Brain microvascular endothelial cell (primary cell): ENCODE measurements at regions of chr9 and their contacts with region 1.

Region 1: DNA sequence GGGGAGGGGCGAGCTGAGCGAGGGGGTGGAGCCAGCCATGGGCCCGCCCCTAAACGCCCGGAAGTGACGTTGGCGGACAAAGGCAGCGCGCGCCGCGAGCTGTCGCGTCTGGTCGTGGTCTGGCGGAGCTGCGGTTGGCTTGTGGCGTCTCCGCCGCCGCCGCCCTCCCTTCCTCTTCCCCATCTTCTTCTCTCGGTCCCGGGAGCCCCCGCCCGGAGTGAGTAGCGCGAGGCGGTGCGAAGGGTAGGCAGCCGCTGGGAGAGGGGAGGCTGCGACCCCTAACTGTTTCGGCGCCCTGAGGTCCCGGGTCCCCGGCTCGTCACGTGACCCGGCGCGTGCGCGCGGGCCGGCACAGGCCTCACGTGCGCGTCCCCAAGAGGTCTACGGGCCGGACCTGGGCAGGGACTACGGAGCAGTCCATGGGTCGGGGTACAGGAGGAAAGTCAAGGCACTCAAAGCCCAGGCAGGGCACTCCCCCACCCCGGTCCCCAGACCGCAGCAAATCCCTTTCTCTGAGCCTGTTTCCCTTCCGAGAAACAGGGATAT is at the start of gene NTMT1:
- DNase-seq: peak; percentile 73
- H3K4me3 ChIP-seq: peak within 1 kb of the TSS; percentile 85
- H3K27ac ChIP-seq: peak within 1 kb of the TSS; percentile 93
- H3K27me3 ChIP-seq: no peaks in the 10 kb centered on the region
- CTCF ChIP-seq: no peak

Region 2: GRCh38 chr9:129139993-129140396 is 486.2 kb before region 1 on chr9:
- in situ Hi-C with region 1: loop called (anchors 10 kb)
- DNase-seq: peak; percentile 99
- H3K4me3 ChIP-seq: peak overlapping the region; percentile 37
- H3K27ac ChIP-seq: peak overlapping the region; percentile 100
- H3K27me3 ChIP-seq: no peaks in the 10 kb centered on the region
- CTCF ChIP-seq: no peak

Region 3: GRCh38 chr9:129536041-129536440 is 90.1 kb before region 1 on chr9:
- in situ Hi-C with region 1: no loop called
- DNase-seq: no peak
- H3K4me3 ChIP-seq: no peak overlapping the region
- H3K27ac ChIP-seq: no peak overlapping the region
- H3K27me3 ChIP-seq: no peaks in the 10 kb centered on the region
- CTCF ChIP-seq: no peak

Region 4: DNA sequence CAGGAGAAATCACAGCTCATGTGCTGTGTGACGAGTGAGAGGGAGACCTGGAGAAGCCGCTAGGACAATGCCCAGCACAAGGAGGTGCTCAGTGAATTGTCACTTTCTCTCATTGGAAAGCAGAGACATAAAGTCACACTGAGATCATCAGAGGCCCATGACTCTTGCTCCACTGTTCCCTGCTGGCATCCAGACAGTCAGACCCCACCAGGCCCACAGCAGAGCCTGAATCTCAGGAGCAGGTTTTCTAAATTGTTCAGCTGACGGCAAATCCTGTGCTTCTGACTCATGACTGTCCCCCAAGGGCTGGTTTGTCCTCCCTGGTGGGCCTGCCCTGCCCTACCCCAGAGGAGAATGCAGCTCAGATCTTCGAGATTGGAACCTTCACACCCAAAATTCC is 123.8 kb after region 1 on chr9:
- in situ Hi-C with region 1: no loop called
- DNase-seq: peak; percentile 33
- H3K4me3 ChIP-seq: no peak overlapping the region
- H3K27ac ChIP-seq: peak overlapping the region; percentile 1
- H3K27me3 ChIP-seq: no peaks in the 10 kb centered on the region
- CTCF ChIP-seq: no peak